MCF 10A (cell line): ENCODE measurements at regions of chr5 and their contacts with region 1.

Region 1: GRCh38 chr5:149442563-149443182 is 63.6 kb upstream of the IL17B start:
- DNase-seq: peak; percentile 88
- H3K4me3 Mint-ChIP-seq: peak overlapping the region; percentile 41
- H3K27ac Mint-ChIP-seq: peak overlapping the region; percentile 84
- H3K4me1 Mint-ChIP-seq: peaks cover 65% of the 10 kb centered on the region
- H3K27me3 Mint-ChIP-seq: no peaks in the 10 kb centered on the region
- CTCF ChIP-seq: peak; percentile 96

Region 2: DNA sequence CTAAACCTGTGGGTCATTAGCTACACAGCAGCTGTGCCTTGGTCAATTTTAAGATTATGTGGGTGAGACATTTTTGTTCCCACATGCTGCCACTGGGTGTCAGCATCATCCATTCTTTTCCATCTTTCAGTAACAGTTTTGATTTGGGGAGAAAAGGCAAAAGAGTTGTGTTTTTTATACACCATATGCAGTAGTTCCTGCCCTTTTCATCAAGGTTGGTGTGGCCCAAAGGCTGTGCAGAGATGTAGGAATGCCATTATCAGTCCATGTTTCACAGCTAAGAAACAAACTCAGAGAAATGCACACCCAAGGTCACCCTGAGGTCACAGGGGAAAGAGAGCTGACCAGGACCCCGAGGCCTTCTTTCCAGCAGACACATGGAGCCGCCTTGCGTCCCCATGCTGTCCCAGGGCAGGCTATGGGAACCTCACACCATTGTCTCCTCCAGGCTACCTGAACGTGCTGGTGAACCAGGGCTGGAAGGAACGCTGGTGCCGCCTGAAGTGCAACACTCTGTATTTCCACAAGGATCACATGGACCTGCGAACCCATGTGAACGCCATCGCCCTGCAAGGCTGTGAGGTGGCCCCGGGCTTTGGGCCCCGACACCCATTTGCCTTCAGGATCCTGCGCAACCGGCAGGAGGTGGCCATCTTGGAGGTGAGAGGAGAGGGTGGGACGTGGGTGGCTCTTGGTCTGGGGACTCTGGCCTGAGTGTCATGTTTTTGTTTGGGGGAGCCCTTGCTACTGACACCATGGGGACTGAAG is 125.2 kb before region 1 on chr5:
- CTCF ChIA-PET with region 1: interaction called, 11 read pairs
- POLR2A ChIA-PET with region 1: interaction called, 75 read pairs
- intact Hi-C with region 1: no loop called
- DNase-seq: peak; percentile 71
- H3K4me3 Mint-ChIP-seq: no peak overlapping the region
- H3K27ac Mint-ChIP-seq: no peak overlapping the region
- H3K4me1 Mint-ChIP-seq: peaks cover 12% of the 10 kb centered on the region
- H3K27me3 Mint-ChIP-seq: no peaks in the 10 kb centered on the region
- CTCF ChIP-seq: peak; percentile 78

Region 3: GRCh38 chr5:149466457-149466972 is 23.8 kb after region 1 on chr5:
- CTCF ChIA-PET with region 1: interaction called, 78 read pairs
- POLR2A ChIA-PET with region 1: interaction called, 1,058 read pairs
- intact Hi-C with region 1: no loop called
- DNase-seq: peak; percentile 36
- H3K4me3 Mint-ChIP-seq: no peak overlapping the region
- H3K27ac Mint-ChIP-seq: no peak overlapping the region
- H3K4me1 Mint-ChIP-seq: peaks cover 13% of the 10 kb centered on the region
- H3K27me3 Mint-ChIP-seq: no peaks in the 10 kb centered on the region
- CTCF ChIP-seq: no peak

Region 4: GRCh38 chr5:149490599-149491485 is 48.2 kb after region 1 on chr5:
- CTCF ChIA-PET with region 1: interaction called, 103 read pairs
- POLR2A ChIA-PET with region 1: interaction called, 1,058 read pairs
- intact Hi-C with region 1: loop called (anchors 1 kb)
- DNase-seq: no peak
- H3K4me3 Mint-ChIP-seq: no peak overlapping the region
- H3K27ac Mint-ChIP-seq: peak overlapping the region; percentile 98
- H3K4me1 Mint-ChIP-seq: peaks cover 44% of the 10 kb centered on the region
- H3K27me3 Mint-ChIP-seq: no peaks in the 10 kb centered on the region
- CTCF ChIP-seq: no peak

Region 5: DNA sequence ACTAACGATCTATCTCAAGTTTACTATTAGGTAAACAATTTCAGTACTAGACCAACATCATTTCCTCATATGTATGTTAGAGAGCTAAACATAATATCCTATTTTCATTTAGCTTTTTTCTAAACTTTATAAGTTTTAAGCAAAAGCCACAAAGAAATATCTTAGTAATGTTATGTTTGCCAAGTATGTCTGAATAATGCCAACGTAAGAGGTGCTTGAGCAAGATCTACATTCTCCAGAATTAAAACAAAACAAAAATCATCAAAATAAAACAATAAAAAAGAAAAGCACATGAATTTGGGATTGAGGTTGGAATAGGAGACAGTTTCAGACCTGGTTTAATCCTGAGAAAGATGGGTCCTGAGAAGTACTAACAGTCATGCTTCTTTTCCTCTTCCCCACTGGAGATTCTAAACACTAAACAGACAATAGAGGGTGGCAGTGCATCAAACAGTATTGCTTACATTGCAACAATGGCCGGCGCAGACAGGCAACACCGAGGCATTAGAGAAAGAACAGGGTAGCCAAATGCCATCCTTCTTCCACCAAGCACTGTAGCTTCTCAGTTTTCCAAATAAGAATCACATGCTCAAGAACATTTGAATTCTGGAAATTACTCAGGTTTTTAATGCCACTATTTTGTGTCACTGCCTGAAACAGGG is 74.9 kb after region 1 on chr5:
- CTCF ChIA-PET with region 1: interaction called, 43 read pairs
- POLR2A ChIA-PET with region 1: interaction called, 13 read pairs
- intact Hi-C with region 1: no loop called
- DNase-seq: peak; percentile 43
- H3K4me3 Mint-ChIP-seq: peak overlapping the region; percentile 36
- H3K27ac Mint-ChIP-seq: peak overlapping the region; percentile 52
- H3K4me1 Mint-ChIP-seq: peaks cover 63% of the 10 kb centered on the region
- H3K27me3 Mint-ChIP-seq: no peaks in the 10 kb centered on the region
- CTCF ChIP-seq: no peak

Region 6: GRCh38 chr5:149567226-149567625 is 124.6 kb after region 1 on chr5:
- CTCF ChIA-PET with region 1: interaction called, 49 read pairs
- POLR2A ChIA-PET with region 1: interaction called, 162 read pairs
- intact Hi-C with region 1: loop called (anchors 1 kb)
- DNase-seq: no peak
- H3K4me3 Mint-ChIP-seq: no peak overlapping the region
- H3K27ac Mint-ChIP-seq: no peak overlapping the region
- H3K4me1 Mint-ChIP-seq: peaks cover 20% of the 10 kb centered on the region
- H3K27me3 Mint-ChIP-seq: no peaks in the 10 kb centered on the region
- CTCF ChIP-seq: no peak

Region 7: DNA sequence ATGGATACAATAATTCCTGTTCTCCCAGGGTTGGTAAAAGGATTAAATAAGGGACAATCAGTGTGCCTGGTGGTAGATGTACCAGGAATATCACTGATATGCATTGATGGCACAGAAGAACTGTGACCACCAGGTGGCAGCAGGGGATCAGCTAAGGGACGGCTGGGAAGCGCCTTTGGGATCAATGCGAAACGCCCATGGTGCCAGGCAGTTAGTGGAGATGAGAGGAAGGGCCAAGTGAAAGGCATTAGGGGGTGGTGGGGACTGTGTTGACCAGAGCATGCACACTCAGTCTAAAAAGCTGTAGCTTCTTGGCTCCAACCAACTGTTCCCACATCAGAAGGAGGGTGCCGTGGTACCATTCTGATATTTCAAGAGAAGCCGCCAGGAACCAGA is 194.2 kb after region 1 on chr5:
- CTCF ChIA-PET with region 1: interaction called, 5 read pairs
- POLR2A ChIA-PET with region 1: interaction called, 13 read pairs
- intact Hi-C with region 1: no loop called
- DNase-seq: peak; percentile 90
- H3K4me3 Mint-ChIP-seq: no peak overlapping the region
- H3K27ac Mint-ChIP-seq: no peak overlapping the region
- H3K4me1 Mint-ChIP-seq: peaks cover 47% of the 10 kb centered on the region
- H3K27me3 Mint-ChIP-seq: no peaks in the 10 kb centered on the region
- CTCF ChIP-seq: peak; percentile 98